Psoas muscle (tissue), 8 donors: ENCODE measurements at regions of chr10 and their contacts with region 1.

Region 1: DNA sequence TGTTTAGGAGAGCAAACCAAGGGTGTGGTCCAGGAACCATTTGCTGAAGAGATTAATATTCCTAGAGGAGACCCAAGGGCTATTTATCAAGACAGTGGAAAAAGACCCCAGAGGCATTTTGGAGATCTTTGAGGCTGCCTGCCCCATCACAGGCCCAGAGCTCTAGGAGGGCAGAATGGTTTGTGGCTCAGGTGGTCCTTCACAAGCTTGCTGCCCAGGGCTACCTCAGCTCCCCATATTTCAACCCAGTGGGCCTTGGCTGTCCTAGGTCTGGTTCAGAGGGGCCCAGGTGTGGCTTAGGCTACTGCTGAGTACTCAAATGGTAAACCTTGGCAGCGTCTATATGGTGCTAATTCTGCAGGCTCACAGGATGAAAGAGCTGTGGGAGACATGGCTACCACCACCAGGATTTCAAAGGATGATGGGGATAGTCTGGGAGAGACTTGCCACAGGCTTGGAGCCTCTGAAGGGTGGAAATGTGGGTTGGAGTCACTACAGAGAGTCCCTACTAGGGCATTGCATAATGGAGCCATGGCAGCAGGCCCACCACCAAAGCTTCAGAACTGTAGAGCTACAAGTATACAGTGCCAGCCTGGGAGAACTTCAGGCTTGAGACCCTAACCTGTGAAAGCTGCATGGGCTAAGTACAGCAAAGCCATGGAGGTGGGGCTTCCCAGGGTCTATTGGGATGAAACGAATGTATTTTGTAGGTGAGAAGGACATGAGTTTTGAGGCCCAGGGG is 24.3 kb downstream of the PTEN start:
- DNase-seq: no peak
- ATAC-seq: peak in 2 of 4 donors; percentile 25 to 31
- H3K4me3 ChIP-seq: no peak overlapping the region
- H3K27ac ChIP-seq: no peak overlapping the region
- H3K4me1 ChIP-seq: peaks cover 6% of the 10 kb centered on the region
- H3K27me3 ChIP-seq: no peaks in the 10 kb centered on the region
- CTCF ChIP-seq: no peak

Region 2: GRCh38 chr10:87635610-87636312 is 252.0 kb before region 1 on chr10:
- intact Hi-C with region 1: no loop called
- DNase-seq: no peak
- ATAC-seq: no peak
- H3K4me3 ChIP-seq: no peak overlapping the region
- H3K27ac ChIP-seq: no peak overlapping the region
- H3K4me1 ChIP-seq: no peaks in the 10 kb centered on the region
- H3K27me3 ChIP-seq: no peaks in the 10 kb centered on the region
- CTCF ChIP-seq: no peak

Region 3: DNA sequence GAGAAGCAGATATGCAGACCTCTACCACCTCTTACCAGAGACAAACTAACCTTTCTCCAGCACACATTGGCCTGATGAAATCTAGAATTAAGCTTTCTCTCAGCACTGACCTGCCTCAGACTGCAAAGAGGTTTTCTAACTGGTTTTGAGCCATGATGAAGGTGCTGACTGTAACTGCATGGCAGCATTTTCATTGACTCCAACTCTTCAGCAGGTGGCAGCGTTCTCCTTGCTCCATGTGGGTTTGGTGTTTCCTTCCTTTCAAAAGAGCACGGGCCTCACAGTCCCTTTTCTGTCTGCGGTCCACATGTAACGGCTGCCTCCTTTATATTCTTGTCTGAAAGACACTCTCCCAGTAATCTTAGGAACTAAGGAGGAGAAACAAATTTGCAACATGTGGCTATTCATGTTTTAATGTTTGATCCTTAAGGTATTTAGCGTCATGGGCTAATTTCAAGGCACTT is 36.9 kb before region 1 on chr10:
- intact Hi-C with region 1: no loop called
- DNase-seq: peak; percentile 37 to 65
- ATAC-seq: peak; percentile 88 to 99 (median 94)
- H3K4me3 ChIP-seq: no peak overlapping the region
- H3K27ac ChIP-seq: no peak overlapping the region
- H3K4me1 ChIP-seq: peaks cover 3% of the 10 kb centered on the region
- H3K27me3 ChIP-seq: no peaks in the 10 kb centered on the region
- CTCF ChIP-seq: peak; percentile 75

Region 4: GRCh38 chr10:87952612-87953011 is 64.9 kb after region 1 on chr10:
- intact Hi-C with region 1: loop called in 1 of 2 experiments (anchors 10 kb)
- DNase-seq: no peak
- ATAC-seq: no peak
- H3K4me3 ChIP-seq: no peak overlapping the region
- H3K27ac ChIP-seq: no peak overlapping the region
- H3K4me1 ChIP-seq: peaks cover 7% of the 10 kb centered on the region
- H3K27me3 ChIP-seq: no peaks in the 10 kb centered on the region
- CTCF ChIP-seq: no peak